ENCODE measurements at regions of chr12 and their contacts with region 1.

Region 1: GRCh38 chr12:57309420-57309819 is 58.4 kb upstream of the STAC3 start:
- DNase-seq: no peak
- ATAC-seq: no peak
- H3K4me3 Mint-ChIP-seq: no peak overlapping the region
- H3K27ac Mint-ChIP-seq: no peak overlapping the region
- H3K4me1 Mint-ChIP-seq: peaks cover 10% of the 10 kb centered on the region
- H3K27me3 Mint-ChIP-seq: no peaks in the 10 kb centered on the region

Region 2: GRCh38 chr12:56947633-56948456 is 361.6 kb before region 1 on chr12:
- CTCF ChIA-PET with region 1: no interaction called
- POLR2A ChIA-PET with region 1: no interaction called
- DNase-seq: no peak
- ATAC-seq: no peak
- H3K4me3 Mint-ChIP-seq: no peak overlapping the region
- H3K27ac Mint-ChIP-seq: no peak overlapping the region
- H3K4me1 Mint-ChIP-seq: no peaks in the 10 kb centered on the region
- H3K27me3 Mint-ChIP-seq: peaks cover 31% of the 10 kb centered on the region

Region 3: GRCh38 chr12:57319678-57320469 is 10.5 kb after region 1 on chr12:
- CTCF ChIA-PET with region 1: interaction called, 13 read pairs
- POLR2A ChIA-PET with region 1: no interaction called
- DNase-seq: no peak
- ATAC-seq: no peak
- H3K4me3 Mint-ChIP-seq: no peak overlapping the region
- H3K27ac Mint-ChIP-seq: no peak overlapping the region
- H3K4me1 Mint-ChIP-seq: peaks cover 3% of the 10 kb centered on the region
- H3K27me3 Mint-ChIP-seq: no peaks in the 10 kb centered on the region